GM18951 (cell line): ENCODE measurements at regions of chr12 and their contacts with region 1.

Region 1: DNA sequence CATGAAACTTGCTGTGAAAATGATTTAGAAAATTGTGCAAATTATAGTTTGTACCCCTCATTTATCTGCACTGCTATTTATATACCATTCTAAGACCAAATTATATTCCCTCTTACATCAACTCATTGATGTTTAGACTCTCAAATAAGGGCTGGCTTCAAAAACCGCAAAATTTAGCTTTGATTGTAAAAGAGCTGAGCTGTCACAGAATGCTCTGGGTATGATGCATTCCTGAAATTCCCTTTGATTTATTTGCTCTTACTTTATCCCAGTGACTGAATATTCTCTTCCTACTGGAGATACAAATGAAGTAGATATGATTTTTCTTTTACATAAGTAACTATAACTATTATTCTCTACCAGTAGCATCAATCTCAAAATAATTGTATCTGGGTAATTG is 78.0 kb upstream of the TMTC2 start:
- POLR2A ChIP-seq: no peak

Region 2: DNA sequence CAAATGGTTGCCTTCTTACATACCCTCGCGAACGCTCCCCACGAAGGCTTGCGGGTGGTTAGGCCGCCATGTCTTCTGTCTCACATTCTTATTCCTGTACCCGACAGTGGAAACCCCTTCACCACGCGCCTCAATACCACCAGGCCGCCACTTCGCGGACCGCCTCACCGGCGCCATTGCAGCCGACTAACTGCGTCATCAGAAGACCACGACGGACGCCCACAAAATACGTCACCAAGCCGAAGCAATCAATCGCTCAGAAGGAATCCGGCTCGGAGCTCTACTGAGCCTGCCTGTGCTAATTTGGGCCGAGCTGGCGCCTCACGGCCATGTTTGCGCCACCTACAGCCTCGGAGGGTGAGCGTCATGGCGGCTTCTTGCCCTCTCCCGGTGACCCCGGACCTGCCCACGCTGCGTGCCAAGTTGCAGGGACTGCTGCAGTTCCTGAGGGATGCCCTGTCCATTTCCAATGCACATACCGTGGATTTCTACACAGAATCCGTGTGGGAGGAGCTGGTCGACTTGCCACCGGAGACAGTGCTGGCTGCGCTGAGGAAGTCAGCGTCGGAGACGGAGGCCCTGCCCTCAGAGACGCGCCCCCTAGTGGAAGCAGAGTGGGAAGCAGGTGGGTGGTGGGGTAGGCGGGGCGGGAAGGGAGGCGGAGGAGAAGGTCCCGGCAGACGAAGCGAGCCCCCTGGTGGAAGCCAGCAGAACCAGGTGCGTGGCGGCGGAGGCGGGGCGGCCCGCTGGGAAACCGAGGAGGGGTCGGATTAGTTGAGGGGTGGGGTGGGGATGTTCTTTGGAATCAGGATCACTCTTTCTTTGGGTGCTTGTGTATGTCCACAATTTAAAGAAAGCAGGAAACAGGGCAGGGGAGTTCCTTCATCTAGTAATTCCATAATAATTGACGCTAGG is 250.2 kb before region 1 on chr12 and contains the starts of genes CCDC59 and METTL25:
- in situ Hi-C with region 1: loop called (anchors 25 kb)
- POLR2A ChIP-seq: peak; percentile 90

Region 3: GRCh38 chr12:82746668-82747067 is 138.0 kb after region 1 on chr12:
- in situ Hi-C with region 1: no loop called
- POLR2A ChIP-seq: no peak

Region 4: GRCh38 chr12:82793751-82794281 is 185.1 kb after region 1 on chr12:
- in situ Hi-C with region 1: no loop called
- POLR2A ChIP-seq: no peak